Activated CD8-positive, alpha-beta T cell treated with anti-CD3 and anti-CD28 coated beads, Interleukin-2, amount 10 ng/mL, durations not matched to agents 7 days and 5 days (primary cell): ENCODE measurements at regions of chr15 and their contacts with region 1.

Region 1: DNA sequence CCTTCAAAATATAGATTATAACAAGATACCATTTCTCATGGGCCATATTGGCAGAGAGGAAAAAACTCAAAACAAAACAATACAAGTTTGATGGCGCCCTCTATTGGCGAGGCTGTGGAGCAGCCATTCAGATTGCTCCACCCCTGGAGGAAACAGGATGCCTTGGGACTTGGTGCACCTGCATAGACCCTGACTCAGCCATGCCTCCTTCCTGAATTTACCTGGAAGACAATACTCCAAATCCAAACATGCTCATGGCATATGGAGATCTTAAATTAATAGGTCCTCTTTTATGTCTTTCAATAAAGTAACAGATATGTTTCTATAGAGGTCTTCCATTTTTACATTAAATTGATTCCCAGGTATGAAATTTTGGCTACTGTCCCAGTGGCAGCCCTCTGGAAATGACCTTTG is 90.0 kb downstream of the APBA2 start:
- DNase-seq: peak; percentile 84
- ATAC-seq: peak; percentile 81
- H3K4me3 Mint-ChIP-seq: no peak overlapping the region
- H3K27ac Mint-ChIP-seq: no peak overlapping the region
- H3K4me1 Mint-ChIP-seq: peaks cover 33% of the 10 kb centered on the region
- H3K27me3 Mint-ChIP-seq: no peaks in the 10 kb centered on the region

Region 2: GRCh38 chr15:28921919-28922706 is 53.7 kb before region 1 on chr15:
- CTCF ChIA-PET with region 1: interaction called, 29 read pairs
- POLR2A ChIA-PET with region 1: interaction called, 3 read pairs
- DNase-seq: no peak
- ATAC-seq: no peak
- H3K4me3 Mint-ChIP-seq: no peak overlapping the region
- H3K27ac Mint-ChIP-seq: peak overlapping the region; percentile 23
- H3K4me1 Mint-ChIP-seq: peaks cover 58% of the 10 kb centered on the region
- H3K27me3 Mint-ChIP-seq: no peaks in the 10 kb centered on the region

Region 3: GRCh38 chr15:28935326-28935725 is 40.4 kb before region 1 on chr15:
- CTCF ChIA-PET with region 1: interaction called, 29 read pairs
- POLR2A ChIA-PET with region 1: no interaction called
- DNase-seq: peak; percentile 82
- ATAC-seq: peak; percentile 76
- H3K4me3 Mint-ChIP-seq: no peak overlapping the region
- H3K27ac Mint-ChIP-seq: peak overlapping the region; percentile 27
- H3K4me1 Mint-ChIP-seq: peaks cover 70% of the 10 kb centered on the region
- H3K27me3 Mint-ChIP-seq: no peaks in the 10 kb centered on the region

Region 4: GRCh38 chr15:28955160-28956008 is 20.4 kb before region 1 on chr15:
- CTCF ChIA-PET with region 1: interaction called, 25 read pairs
- POLR2A ChIA-PET with region 1: no interaction called
- DNase-seq: peak; percentile 60
- ATAC-seq: peak; percentile 80
- H3K4me3 Mint-ChIP-seq: peak overlapping the region; percentile 48
- H3K27ac Mint-ChIP-seq: peak overlapping the region; percentile 81
- H3K4me1 Mint-ChIP-seq: peaks cover 48% of the 10 kb centered on the region
- H3K27me3 Mint-ChIP-seq: no peaks in the 10 kb centered on the region